BJ (cell line): ENCODE measurements at regions of chr13 and their contacts with region 1.

Region 1: GRCh38 chr13:26698392-26699196 is 62.0 kb downstream of the GPR12 start:
- DNase-seq: peak; percentile 40
- H3K4me3 ChIP-seq: 0 out of 2 replicates have a peak overlapping the region, but pooled peaks have one; percentile 10
- H3K27me3 ChIP-seq: no peaks in the 10 kb centered on the region
- CTCF ChIP-seq: peak; percentile 96

Region 2: DNA sequence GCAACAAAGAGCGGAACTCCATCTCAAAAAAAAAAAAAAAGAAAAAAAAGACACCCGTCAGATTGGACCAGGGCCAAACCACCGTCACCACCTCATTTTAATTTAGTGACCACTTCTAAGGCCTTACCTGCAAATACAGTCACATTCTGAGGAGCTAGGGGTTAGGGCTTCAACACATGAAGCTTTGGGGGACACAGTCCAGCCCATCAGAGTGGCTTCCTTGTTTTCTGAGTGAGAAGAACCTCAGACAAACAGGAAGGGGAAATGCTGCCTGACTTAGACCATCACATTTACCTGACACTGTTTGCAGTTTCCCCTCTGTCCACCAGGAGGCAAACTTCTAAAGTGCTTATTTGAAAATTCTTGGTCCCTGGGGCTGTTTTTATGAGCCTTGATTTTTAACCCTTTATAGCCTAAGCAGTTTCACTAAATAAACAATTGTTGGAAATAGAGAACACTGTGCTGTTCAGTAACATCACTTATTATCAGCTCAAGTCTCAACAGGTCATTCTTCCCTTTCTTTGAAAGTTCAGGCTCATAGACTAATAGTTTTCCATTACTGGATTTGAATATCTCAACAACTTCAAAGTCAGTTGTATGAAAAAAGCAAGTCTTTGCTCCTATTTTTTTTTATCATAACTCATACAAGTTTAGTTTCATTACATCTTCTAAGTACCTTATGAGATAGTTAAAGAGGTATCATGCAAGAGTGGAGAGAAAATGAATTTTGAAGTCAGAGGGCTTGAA is 216.0 kb before region 1 on chr13:
- CTCF ChIA-PET with region 1: interaction called, 62 read pairs
- POLR2A ChIA-PET with region 1: no interaction called
- DNase-seq: no peak
- H3K4me3 ChIP-seq: no peak overlapping the region
- H3K27me3 ChIP-seq: no peaks in the 10 kb centered on the region
- CTCF ChIP-seq: peak; percentile 88

Region 3: DNA sequence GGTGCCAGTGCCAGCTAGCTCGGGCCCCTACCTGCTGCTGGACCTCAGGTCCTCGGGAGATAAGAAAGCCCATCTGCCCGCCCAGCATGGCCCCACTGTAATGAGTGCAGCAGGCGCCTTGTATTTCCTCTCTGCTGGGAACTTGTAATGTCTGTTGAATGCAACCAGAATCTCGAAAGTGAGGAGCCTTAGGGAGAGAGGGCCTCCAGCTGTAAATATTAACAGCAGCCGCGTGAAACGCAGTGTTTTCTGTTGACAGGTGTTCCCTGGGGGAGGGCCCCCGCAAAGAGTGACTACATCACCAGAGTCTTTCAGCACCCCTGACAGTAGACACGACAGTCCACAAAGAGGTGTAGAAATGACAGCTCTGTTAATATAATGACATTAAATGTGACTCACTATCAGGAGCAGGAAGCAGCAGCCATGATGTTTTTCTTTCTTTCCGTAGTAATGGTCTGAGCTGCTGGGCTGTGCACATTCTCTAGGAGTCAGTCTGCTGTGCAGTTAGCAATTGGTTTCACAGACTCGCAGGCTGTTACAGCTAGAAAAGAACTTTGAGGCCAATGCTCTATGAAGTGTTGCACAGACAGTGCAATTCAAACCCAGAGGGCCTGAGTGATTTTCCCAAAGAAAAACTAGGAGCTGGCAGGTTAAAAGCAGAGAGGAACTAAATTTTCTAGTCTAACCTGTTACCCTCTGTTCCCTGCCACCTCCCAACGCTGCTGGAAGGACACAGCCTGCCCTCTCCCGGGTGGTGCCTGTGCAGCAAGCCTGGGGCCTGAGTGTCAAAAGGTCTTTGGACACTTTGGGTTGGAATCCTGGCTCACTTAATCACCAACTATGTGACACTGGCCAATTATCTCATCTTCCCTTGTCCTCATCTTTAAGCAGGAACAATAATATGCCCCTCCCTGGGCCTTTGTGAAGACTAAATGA is 199.7 kb before region 1 on chr13:
- CTCF ChIA-PET with region 1: interaction called, 38 read pairs
- POLR2A ChIA-PET with region 1: no interaction called
- DNase-seq: no peak
- H3K4me3 ChIP-seq: no peak overlapping the region
- H3K27me3 ChIP-seq: no peaks in the 10 kb centered on the region
- CTCF ChIP-seq: no peak

Region 4: GRCh38 chr13:26557393-26558023 is 141.1 kb before region 1 on chr13 and contains the start of gene WASF3:
- CTCF ChIA-PET with region 1: interaction called, 10 read pairs
- POLR2A ChIA-PET with region 1: no interaction called
- DNase-seq: peak; percentile 41
- H3K4me3 ChIP-seq: peak within 1 kb of the TSS; percentile 90
- H3K27me3 ChIP-seq: peaks cover 3% of the 10 kb centered on the region; the same call in 1 of the 2 replicates
- CTCF ChIP-seq: no peak
- polyA plus RNA-seq, gene WASF3: 9.5 and 13.0 TPM in 2 replicates

Region 5: GRCh38 chr13:26688286-26688685 is 10.3 kb before region 1 on chr13:
- CTCF ChIA-PET with region 1: interaction called, 21 read pairs
- POLR2A ChIA-PET with region 1: no interaction called
- DNase-seq: no peak
- H3K4me3 ChIP-seq: no peak overlapping the region
- H3K27me3 ChIP-seq: no peaks in the 10 kb centered on the region
- CTCF ChIP-seq: no peak